ENCODE measurements at regions of chr17 and their contacts with region 1.

Region 1: GRCh38 chr17:46782250-46782953 is 36.1 kb downstream of the WNT3 start:
- DNase-seq: no peak
- ATAC-seq: peak in 5 of 8 donors; percentile 39 to 60 (median 42)
- H3K4me3 ChIP-seq: no peak overlapping the region
- H3K27ac ChIP-seq: no peak overlapping the region
- H3K4me1 ChIP-seq: no peaks in the 10 kb centered on the region
- H3K27me3 ChIP-seq: peaks cover 0 to 17% (median 0%) of the 10 kb centered on the region in 7 donors
- CTCF ChIP-seq: peak in 8 of 9 donors; percentile 18 to 61 (median 52)

Region 2: GRCh38 chr17:46811978-46812583 is 29.7 kb after region 1 on chr17:
- intact Hi-C with region 1: loop called in 1 of 10 experiments (anchors 5 kb)
- DNase-seq: no peak
- ATAC-seq: no peak
- H3K4me3 ChIP-seq: no peak overlapping the region
- H3K27ac ChIP-seq: no peak overlapping the region
- H3K4me1 ChIP-seq: no peaks in the 10 kb centered on the region
- H3K27me3 ChIP-seq: peaks cover 6 to 67% (median 52%) of the 10 kb centered on the region in 7 donors
- CTCF ChIP-seq: no peak

Region 3: GRCh38 chr17:46853896-46854444 is 71.6 kb after region 1 on chr17:
- intact Hi-C with region 1: no loop called
- DNase-seq: no peak
- ATAC-seq: no peak
- H3K4me3 ChIP-seq: no peak overlapping the region
- H3K27ac ChIP-seq: no peak overlapping the region
- H3K4me1 ChIP-seq: peaks cover 0 to 12% (median 6%) of the 10 kb centered on the region in 9 donors
- H3K27me3 ChIP-seq: peaks cover 9 to 59% (median 47%) of the 10 kb centered on the region in 7 donors
- CTCF ChIP-seq: no peak